Activated CD4-positive, alpha-beta T cell treated with anti-CD3 and anti-CD28 coated beads, Interleukin-2, amount 10 ng/mL, durations not matched to agents 24 days and 14 days (primary cell): ENCODE measurements at regions of chr12 and their contacts with region 1.

Region 1: DNA sequence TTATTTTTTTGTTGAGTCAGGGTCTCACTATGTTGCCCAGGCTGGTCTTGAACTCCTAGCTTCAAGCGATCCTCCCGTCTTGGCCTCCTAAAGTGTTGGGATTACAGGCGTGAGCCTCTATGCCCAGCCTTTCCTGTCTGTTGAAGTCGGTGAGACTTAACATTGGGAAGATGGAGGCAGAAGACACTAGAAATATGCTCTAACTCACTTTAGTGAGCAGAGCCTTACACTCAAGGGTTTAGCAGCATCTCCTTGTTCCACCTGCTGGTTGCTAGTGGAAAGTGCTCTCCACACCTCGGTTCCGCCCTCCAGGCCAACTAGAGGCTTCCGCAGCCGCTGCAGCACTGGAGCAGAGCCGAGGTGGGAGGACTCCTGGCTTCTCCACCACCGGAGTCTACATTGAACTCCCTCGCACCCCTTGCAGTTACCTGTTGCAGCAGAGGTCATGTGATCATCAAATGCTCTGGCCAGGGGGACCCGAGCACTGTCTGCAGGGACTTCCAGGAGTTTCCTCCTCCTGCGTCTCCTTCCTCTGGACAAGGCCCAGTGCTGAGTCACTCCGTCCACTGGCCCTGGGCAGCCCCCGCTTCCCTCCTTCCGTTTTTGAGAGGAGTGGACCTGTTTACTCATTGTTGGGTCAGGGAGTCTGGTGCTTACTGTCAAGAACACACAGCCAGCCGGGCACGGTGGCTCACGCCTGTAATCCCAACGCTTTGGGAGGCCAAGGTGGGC is 9.4 kb upstream of the HVCN1 start:
- DNase-seq: peak; percentile 95
- H3K4me3 Mint-ChIP-seq: no peak overlapping the region
- H3K27ac Mint-ChIP-seq: peak overlapping the region; percentile 88
- H3K4me1 Mint-ChIP-seq: peaks cover 12% of the 10 kb centered on the region
- H3K27me3 Mint-ChIP-seq: no peaks in the 10 kb centered on the region

Region 2: GRCh38 chr12:110301065-110301806 is 397.1 kb before region 1 on chr12:
- intact Hi-C with region 1: no loop called
- DNase-seq: no peak
- H3K4me3 Mint-ChIP-seq: peak overlapping the region; percentile 22
- H3K27ac Mint-ChIP-seq: peak overlapping the region; percentile 71
- H3K4me1 Mint-ChIP-seq: peaks cover 27% of the 10 kb centered on the region
- H3K27me3 Mint-ChIP-seq: no peaks in the 10 kb centered on the region

Region 3: DNA sequence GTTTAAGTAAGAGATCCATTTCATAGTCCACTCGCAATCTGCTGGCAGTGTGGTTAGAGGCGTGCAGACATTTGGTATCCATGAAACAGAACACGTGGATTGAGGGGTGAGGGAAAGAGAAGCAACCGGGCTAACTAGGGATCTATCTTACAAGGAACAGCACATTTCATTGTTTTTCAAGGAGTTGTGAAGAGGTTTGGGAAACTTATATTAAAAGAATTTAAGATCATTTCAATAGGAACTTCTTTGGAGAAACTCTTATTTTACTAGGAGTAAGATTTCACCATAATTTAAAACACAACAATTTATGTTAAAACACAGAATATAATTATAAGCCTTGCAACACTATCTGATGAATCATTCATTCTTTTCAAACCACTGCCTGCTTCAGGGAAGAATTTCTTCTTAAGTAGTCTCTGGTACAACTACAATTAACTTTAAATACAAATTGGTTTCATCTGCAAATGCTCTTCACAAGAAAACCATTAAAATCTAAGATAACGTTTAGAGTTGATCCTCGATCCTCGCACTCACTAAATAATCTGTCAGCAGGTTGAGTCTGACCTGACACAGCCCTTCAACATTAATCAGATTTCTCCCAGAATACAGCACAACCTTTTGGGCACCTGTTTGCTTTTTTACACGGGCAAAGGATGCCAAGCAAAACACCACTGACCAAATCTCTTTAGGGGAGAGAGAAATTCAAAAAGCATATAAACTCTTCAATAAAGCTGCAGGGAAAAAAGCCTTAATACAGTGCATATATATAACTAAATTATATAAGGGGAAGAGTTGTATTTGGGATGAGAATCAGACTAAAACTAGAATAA is 142.5 kb before region 1 on chr12:
- intact Hi-C with region 1: loop called (anchors 1 kb)
- DNase-seq: no peak
- H3K4me3 Mint-ChIP-seq: no peak overlapping the region
- H3K27ac Mint-ChIP-seq: no peak overlapping the region
- H3K4me1 Mint-ChIP-seq: peaks cover 33% of the 10 kb centered on the region
- H3K27me3 Mint-ChIP-seq: no peaks in the 10 kb centered on the region

Region 4: DNA sequence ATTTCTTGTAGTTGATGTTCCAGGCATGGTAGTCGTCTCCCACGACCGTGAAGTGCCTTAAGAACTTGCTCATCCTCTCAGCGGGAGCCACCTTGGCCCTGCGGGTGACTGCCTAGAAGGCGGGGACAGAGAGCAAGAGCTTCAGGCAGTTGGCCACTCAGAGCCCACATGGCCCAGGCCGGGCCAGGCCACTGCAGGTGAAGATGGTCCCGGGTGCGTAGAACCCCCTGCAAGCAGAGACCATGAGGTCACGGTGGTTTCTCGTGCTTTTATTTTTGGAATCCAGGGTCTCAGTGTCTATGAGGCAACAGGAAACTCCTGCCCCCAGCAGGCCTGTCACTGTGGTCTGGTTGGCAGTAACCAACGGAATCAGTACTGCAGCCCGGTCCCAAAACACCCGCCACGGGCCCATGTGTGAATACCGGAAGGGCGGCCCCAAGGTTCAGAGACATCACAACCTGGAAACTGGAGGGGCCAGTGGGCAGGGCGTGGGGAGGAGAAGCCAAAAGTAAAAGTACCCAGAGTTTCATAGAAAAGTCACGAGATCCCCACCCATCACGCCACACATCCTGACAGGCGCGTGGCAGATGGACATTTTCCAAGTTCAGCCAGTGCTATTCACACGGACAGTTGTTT is 36.9 kb before region 1 on chr12:
- intact Hi-C with region 1: loop called (anchors 5 kb)
- DNase-seq: peak; percentile 79
- H3K4me3 Mint-ChIP-seq: peak overlapping the region; percentile 62
- H3K27ac Mint-ChIP-seq: peak overlapping the region; percentile 88
- H3K4me1 Mint-ChIP-seq: peaks cover 20% of the 10 kb centered on the region
- H3K27me3 Mint-ChIP-seq: no peaks in the 10 kb centered on the region